GM10248 (cell line): ENCODE measurements at regions of chr10 and their contacts with region 1.

Region 1: DNA sequence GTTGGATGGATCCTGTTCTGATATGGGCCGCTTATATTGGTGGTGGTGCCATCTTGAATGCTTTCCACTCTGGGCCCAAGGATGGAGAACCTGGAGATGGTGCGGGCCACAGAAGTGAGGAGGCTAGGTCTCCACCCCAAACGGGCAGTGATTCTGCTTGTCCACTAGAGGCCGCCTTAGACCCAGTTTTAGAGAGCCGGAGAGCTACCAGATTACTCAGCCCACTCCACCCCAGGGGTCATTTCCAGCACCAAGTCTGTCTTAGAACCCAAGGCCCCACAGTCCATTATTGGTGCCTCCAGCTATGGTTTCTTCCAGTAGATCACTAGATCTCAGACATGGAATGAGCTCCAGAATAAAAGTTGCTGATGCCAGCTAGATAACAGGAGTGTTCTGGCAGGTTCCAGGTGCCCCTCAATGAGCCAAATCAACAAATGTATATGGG is 11.8 kb upstream of the CAMK2G start:
- DNase-seq: peak; percentile 83
- CTCF ChIP-seq: peak; percentile 83

Region 2: DNA sequence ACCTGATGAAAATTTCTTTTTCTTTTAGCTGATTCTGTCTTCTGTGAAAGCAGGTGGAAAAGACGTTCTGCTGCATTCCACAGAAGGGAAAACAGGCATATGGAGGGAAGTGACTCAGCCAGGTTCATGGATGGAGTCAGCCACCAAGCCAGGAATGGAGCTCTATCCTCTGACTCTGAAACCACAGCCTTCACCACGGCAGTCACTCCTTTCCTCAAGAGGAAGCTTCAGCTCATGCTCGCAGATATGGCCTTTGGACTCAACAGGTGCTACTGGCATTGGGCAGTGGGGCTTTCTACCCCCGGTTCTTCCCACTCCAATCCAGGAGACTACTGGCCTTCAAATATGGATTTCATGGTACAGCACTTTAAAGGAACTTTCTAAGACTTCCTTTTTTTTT is 13.3 kb after region 1 on chr10:
- CTCF ChIA-PET with region 1: interaction called, 84 read pairs
- POLR2A ChIA-PET with region 1: no interaction called
- DNase-seq: no peak
- CTCF ChIP-seq: no peak

Region 3: GRCh38 chr10:73956476-73957359 is 70.6 kb after region 1 on chr10:
- CTCF ChIA-PET with region 1: interaction called, 25 read pairs
- POLR2A ChIA-PET with region 1: no interaction called
- DNase-seq: peak; percentile 69
- CTCF ChIP-seq: no peak

Region 4: GRCh38 chr10:74081192-74081803 is 195.2 kb after region 1 on chr10:
- CTCF ChIA-PET with region 1: interaction called, 63 read pairs
- POLR2A ChIA-PET with region 1: no interaction called
- DNase-seq: peak; percentile 37
- CTCF ChIP-seq: peak; percentile 64